BJ (cell line): ENCODE measurements at regions of chr19 and their contacts with region 1.

Region 1: GRCh38 chr19:46021531-46022041 is 1.3 kb downstream of the PGLYRP1 start:
- DNase-seq: no peak
- H3K4me3 ChIP-seq: no peak overlapping the region
- H3K27me3 ChIP-seq: peaks cover 4% of the 10 kb centered on the region
- CTCF ChIP-seq: no peak

Region 2: DNA sequence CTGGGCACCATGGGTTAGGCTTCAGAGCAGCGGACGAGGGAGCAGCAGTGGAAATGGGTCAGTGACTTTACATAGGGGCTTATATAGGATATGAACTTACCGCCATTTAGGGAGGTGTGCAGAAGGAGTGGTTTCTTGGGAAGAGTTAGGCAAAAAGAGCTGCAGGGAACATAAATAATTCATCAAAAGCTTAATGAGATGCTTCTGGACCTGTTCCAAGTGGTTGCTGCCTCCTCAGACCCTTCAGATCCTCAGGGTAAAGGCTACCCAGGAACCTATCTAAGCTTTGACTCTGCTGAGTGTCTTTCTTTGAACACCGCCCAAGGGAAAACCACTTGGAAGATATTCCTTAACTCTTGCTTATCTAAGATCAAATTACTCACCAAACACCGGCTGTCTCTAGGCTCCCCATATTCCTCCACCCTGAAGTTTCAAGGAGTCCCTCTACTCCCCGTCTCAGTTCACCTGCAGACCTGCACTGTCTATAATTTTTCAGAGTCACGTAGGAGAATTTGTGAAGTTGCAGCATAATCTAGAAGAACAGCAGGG is 19.4 kb after region 1 on chr19 and contains the start of gene IGFL4:
- CTCF ChIA-PET with region 1: interaction called, 15 read pairs
- POLR2A ChIA-PET with region 1: no interaction called
- DNase-seq: no peak
- H3K4me3 ChIP-seq: no peak within 1 kb of the TSS
- H3K27me3 ChIP-seq: peaks cover 33% of the 10 kb centered on the region
- CTCF ChIP-seq: no peak
- polyA plus RNA-seq, gene IGFL4: not detected in 2 replicates

Region 3: DNA sequence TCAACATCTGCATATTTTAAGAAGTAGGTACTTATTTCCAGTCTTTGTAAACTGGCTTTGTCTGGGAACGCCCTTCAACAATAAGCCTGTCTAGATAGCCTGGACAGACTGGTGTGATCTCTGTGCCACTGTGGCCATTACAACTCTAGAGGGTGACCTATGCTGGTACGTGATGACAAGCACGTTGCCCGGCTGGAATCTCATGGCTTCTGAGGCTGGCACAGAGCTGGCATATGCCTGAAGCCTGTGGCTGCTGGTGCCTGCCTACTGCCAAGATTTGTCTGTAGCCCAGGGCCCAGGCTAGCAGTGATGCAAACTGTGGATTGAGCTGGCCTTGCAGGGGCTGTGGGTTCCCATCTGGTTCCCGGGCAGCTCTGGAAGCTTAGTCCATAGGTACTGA is 68.9 kb after region 1 on chr19:
- CTCF ChIA-PET with region 1: no interaction called
- POLR2A ChIA-PET with region 1: no interaction called
- DNase-seq: no peak
- H3K4me3 ChIP-seq: no peak overlapping the region
- H3K27me3 ChIP-seq: peaks cover 10% of the 10 kb centered on the region
- CTCF ChIP-seq: no peak

Region 4: GRCh38 chr19:46265217-46265828 is 243.7 kb after region 1 on chr19:
- CTCF ChIA-PET with region 1: interaction called, 84 read pairs
- POLR2A ChIA-PET with region 1: no interaction called
- DNase-seq: peak; percentile 34
- H3K4me3 ChIP-seq: no peak overlapping the region
- H3K27me3 ChIP-seq: peaks cover 10% of the 10 kb centered on the region
- CTCF ChIP-seq: peak; percentile 82